CD4-positive, alpha-beta memory T cell (primary cell): ENCODE measurements at regions of chr16 and their contacts with region 1.

Region 1: GRCh38 chr16:84277237-84277823 is 17.3 kb upstream of the WFDC1 start:
- DNase-seq: peak; percentile 45 to 59 (median 55)
- H3K4me3 ChIP-seq: no peak overlapping the region
- H3K4me3 Mint-ChIP-seq: no peak overlapping the region
- H3K27ac ChIP-seq: no peak overlapping the region
- H3K27ac Mint-ChIP-seq: no peak overlapping the region
- H3K4me1 ChIP-seq: no peaks in the 10 kb centered on the region
- H3K4me1 Mint-ChIP-seq: peaks cover 0 to 1% (median 0%) of the 10 kb centered on the region in 4 donors
- H3K27me3 ChIP-seq: peaks cover 3% of the 10 kb centered on the region
- H3K27me3 Mint-ChIP-seq: peaks cover 10 to 18% of the 10 kb centered on the region in 2 donors

Region 2: DNA sequence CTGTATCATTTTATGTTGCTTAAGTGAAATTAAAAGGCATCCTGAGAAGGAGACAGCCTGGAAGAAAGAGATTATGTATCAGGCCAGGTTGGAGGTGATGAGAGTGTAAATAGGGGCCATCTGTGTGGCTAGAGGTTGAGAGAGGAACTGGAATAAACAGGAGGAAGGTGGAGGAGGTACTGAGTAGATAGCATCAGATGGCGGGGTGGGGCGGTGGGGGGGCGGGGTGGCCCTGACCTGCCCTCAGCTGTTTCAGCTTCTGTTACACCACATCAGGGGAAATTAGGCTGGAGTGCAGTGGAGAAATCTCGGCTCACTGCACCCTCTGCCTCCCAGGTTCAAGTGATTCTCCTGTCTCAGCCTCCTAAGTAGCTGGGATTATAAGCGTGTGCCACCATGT is 30.6 kb before region 1 on chr16:
- CTCF ChIA-PET with region 1: interaction called, 10 read pairs
- POLR2A ChIA-PET with region 1: no interaction called
- intact Hi-C with region 1: no loop called
- DNase-seq: no peak
- H3K4me3 ChIP-seq: no peak overlapping the region
- H3K4me3 Mint-ChIP-seq: no peak overlapping the region
- H3K27ac ChIP-seq: no peak overlapping the region
- H3K27ac Mint-ChIP-seq: no peak overlapping the region
- H3K4me1 ChIP-seq: no peaks in the 10 kb centered on the region
- H3K4me1 Mint-ChIP-seq: peaks cover 0 to 5% (median under 1%) of the 10 kb centered on the region in 4 donors
- H3K27me3 ChIP-seq: no peaks in the 10 kb centered on the region
- H3K27me3 Mint-ChIP-seq: peaks cover 10 to 19% of the 10 kb centered on the region in 2 donors

Region 3: DNA sequence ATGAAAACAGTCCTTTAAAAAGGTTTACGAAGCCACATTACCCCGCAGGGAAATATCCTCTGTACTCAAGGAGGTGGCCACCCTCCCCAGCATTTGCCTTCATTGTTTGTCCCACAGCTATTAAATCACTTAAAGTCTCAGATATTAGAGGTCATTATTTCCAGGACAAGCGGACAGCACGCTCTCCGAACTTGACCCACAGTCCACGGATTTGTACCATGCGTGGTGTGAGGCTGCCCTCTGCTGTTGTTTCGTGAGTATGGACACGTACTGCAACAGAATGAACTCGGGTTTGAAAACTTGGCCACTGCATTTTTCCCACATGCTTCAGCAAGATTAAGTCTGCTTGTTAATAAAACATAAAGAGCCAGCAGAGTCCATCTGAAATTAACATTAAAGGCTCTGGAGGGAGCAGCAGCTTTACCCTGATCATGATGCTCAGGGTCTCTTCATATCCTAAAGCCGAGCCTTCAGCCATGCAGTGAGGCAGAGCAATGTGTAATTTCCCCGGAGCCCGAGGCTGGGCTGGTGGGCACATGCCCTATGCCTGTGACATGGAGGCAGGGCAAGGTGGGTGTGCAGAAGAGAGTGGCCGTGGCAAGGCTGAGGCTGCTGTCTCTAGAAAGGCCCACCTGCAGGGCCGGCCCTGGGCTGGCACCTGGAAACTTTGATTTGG is 207.4 kb after region 1 on chr16:
- CTCF ChIA-PET with region 1: no interaction called
- POLR2A ChIA-PET with region 1: no interaction called
- intact Hi-C with region 1: loop called (anchors 2 kb)
- DNase-seq: no peak
- H3K4me3 ChIP-seq: no peak overlapping the region
- H3K4me3 Mint-ChIP-seq: no peak overlapping the region
- H3K27ac ChIP-seq: no peak overlapping the region
- H3K27ac Mint-ChIP-seq: no peak overlapping the region
- H3K4me1 ChIP-seq: no peaks in the 10 kb centered on the region
- H3K4me1 Mint-ChIP-seq: no peaks in the 10 kb centered on the region
- H3K27me3 ChIP-seq: no peaks in the 10 kb centered on the region
- H3K27me3 Mint-ChIP-seq: no peaks in the 10 kb centered on the region